ENCODE measurements at regions of chr16 and their contacts with region 1.

Region 1: DNA sequence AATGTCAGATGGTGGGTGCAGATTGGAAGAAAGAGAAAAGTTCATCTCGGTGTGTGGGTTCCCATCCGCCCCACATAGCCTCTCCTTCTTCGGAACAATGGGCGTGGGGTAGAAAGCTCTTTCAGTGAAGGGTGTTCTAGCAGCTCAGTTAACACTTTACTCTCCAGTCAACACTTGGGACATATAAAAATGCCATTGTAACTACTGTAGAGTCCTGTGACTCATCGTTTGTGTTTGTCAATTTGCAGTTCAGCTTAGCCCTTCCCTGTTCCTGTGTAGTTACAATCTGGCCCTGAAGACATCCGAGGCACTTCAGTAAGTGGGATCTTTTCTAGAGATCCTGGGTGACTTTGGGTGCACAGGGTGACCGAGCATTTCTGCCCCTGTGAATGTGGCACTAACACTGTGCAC is 11.5 kb upstream of the CLEC18C start:
- DNase-seq: no peak
- H3K4me3 ChIP-seq: no peak overlapping the region
- H3K27ac ChIP-seq: peak overlapping the region; percentile 32
- H3K4me1 ChIP-seq: peaks cover 6% of the 10 kb centered on the region
- H3K27me3 ChIP-seq: no peaks in the 10 kb centered on the region
- CTCF ChIP-seq: no peak

Region 2: DNA sequence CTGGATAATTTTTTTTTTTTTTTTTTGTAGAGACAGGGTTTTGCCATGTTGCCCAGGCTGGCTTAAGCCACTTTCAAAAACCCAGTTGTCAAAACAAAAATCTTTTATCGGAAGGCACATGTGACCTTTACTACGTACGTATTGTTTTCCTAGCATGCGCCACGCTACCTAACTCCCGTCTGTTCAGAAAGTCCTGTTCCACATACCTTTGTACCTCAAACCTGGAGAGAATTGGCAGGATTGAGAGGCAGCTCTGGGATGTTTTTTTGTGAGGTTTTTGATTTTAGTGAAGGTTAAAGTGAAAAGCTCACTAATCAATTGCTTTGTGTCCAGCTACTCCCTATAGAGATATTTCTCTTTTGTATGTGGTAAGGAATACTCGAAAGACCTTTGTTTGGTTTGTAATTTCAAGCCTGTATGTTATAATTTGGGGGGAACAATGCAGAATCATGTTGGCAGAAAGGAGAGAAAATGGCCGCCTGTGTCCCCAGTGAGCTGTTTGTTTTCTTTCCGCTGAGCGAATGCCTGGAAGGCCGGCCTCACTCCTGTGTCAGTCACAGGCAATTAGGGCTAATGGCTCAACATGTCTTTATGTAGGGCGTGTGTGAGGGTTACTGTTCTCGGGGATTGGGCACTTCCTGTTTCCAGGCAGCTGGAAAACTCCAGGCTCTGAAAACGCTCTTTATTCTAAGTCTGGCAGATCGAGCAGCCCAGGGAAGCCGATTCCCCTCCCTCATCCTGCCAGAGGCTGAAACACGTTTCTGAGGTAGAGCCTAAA is 271.7 kb before region 1 on chr16:
- intact Hi-C with region 1: no loop called
- DNase-seq: peak; percentile 62
- H3K4me3 ChIP-seq: no peak overlapping the region
- H3K27ac ChIP-seq: peak overlapping the region; percentile 61
- H3K4me1 ChIP-seq: no peaks in the 10 kb centered on the region
- H3K27me3 ChIP-seq: no peaks in the 10 kb centered on the region
- CTCF ChIP-seq: no peak

Region 3: GRCh38 chr16:70251629-70252354 is 89.7 kb after region 1 on chr16 and contains the start of gene EXOSC6:
- intact Hi-C with region 1: loop called (anchors 10 kb)
- DNase-seq: peak; percentile 93
- H3K4me3 ChIP-seq: peak within 1 kb of the TSS; percentile 69
- H3K27ac ChIP-seq: peak within 1 kb of the TSS; percentile 80
- H3K4me1 ChIP-seq: peaks cover 6% of the 10 kb centered on the region
- H3K27me3 ChIP-seq: no peaks in the 10 kb centered on the region
- CTCF ChIP-seq: peak; percentile 84
- total RNA-seq, gene EXOSC6: 12.2 to 20.0 TPM

Region 4: GRCh38 chr16:70391881-70392481 is 229.9 kb after region 1 on chr16:
- intact Hi-C with region 1: no loop called
- DNase-seq: no peak
- H3K4me3 ChIP-seq: no peak overlapping the region
- H3K27ac ChIP-seq: no peak overlapping the region
- H3K4me1 ChIP-seq: peaks cover 3% of the 10 kb centered on the region
- H3K27me3 ChIP-seq: no peaks in the 10 kb centered on the region
- CTCF ChIP-seq: no peak

Measured in colonic mucosa (tissue), 4 donors.